ENCODE measurements at regions of chr3 and their contacts with region 1.

Region 1: GRCh38 chr3:45043728-45044299 is 17.7 kb downstream of the CLEC3B start:
- DNase-seq: no peak
- H3K4me3 ChIP-seq: no peak overlapping the region
- H3K27ac ChIP-seq: no peak overlapping the region
- H3K4me1 ChIP-seq: no peaks in the 10 kb centered on the region
- H3K27me3 ChIP-seq: peaks cover 7 to 13% of the 10 kb centered on the region in 2 experiments
- CTCF ChIP-seq: no peak
- POLR2A ChIP-seq: no peak

Region 2: DNA sequence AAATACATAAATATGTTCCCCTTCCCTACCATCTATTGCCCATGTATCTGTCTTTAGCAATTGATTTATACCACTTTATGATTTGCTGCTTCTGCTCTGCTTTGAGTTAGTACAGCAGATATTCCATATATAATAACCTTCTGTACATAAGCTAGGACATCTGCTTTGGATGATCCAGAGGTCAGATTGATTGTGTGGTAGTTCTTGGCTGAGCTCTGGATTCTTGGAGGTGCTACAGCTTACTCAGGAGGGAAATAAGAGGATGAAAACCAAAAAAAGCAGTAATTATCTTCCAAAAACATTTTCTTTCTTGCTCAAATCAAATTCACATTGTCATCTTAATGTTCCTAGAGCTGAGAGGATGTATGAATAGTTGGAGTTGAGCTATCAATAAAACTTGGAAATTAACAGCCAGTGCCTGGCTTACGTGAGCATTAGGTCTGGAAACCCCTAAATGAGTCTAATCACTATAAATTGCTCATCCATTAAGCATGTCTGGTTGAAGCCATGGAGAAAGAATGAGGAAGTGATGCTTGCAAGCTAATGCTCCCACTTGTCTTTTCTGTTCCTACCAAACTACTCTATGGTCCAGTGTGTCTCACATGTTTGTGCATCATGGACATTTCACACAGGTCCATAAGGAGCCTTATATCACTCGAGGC is 218.4 kb before region 1 on chr3:
- CTCF ChIA-PET with region 1: no interaction called
- POLR2A ChIA-PET with region 1: no interaction called
- dilution Hi-C with region 1: no loop called
- intact Hi-C with region 1: no loop called
- DNase-seq: no peak
- H3K4me3 ChIP-seq: no peak overlapping the region
- H3K27ac ChIP-seq: no peak overlapping the region
- H3K4me1 ChIP-seq: no peaks in the 10 kb centered on the region
- H3K27me3 ChIP-seq: no peaks in the 10 kb centered on the region
- CTCF ChIP-seq: no peak
- POLR2A ChIP-seq: no peak

Region 3: DNA sequence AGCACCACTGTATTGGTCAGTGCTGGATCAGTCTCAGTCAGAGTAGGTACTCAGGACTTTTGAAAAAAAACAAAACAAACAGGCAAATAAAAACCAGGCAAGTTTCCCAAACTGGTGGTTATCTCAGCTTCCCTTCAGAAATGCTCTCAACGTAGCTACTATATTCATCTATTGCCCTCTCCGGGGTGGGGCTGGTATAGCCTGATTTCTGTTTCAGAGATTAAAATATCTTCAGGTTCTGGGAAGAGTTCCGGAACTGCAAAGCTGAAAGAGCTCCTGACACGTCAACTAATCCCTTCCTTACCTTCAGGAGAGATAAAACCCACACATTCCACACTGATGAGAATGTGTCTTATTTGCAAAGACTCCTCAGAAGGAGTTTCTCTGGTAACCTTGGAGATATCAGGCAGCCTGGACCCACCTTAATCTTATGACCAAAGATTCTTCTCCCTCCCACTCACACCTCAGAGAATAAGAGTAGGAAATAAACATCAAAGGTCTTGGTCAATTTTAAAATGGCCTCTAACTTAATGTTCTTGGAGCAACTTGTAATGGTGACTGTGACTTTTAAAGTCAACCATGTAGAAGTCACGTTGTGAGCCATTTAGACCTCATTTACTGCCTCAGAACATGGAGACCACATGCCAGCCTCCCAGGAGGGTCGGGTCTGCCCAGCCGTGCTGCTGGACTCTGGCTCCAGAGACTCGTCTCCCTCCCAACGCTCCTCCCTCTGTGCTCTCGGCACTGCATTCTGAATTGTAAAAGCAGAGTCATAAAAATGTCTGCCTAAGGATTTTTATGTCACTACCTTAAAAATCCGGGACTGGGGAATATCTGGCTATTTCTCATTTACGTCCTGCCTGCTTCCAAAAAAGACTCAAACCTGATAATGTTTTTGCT is 48.6 kb after region 1 on chr3:
- CTCF ChIA-PET with region 1: interaction called, 15 read pairs
- POLR2A ChIA-PET with region 1: no interaction called
- dilution Hi-C with region 1: no loop called
- intact Hi-C with region 1: no loop called
- DNase-seq: no peak
- H3K4me3 ChIP-seq: no peak overlapping the region
- H3K27ac ChIP-seq: no peak overlapping the region
- H3K4me1 ChIP-seq: no peaks in the 10 kb centered on the region
- H3K27me3 ChIP-seq: peaks cover 2 to 5% of the 10 kb centered on the region in 2 experiments
- CTCF ChIP-seq: no peak
- POLR2A ChIP-seq: no peak

Region 4: DNA sequence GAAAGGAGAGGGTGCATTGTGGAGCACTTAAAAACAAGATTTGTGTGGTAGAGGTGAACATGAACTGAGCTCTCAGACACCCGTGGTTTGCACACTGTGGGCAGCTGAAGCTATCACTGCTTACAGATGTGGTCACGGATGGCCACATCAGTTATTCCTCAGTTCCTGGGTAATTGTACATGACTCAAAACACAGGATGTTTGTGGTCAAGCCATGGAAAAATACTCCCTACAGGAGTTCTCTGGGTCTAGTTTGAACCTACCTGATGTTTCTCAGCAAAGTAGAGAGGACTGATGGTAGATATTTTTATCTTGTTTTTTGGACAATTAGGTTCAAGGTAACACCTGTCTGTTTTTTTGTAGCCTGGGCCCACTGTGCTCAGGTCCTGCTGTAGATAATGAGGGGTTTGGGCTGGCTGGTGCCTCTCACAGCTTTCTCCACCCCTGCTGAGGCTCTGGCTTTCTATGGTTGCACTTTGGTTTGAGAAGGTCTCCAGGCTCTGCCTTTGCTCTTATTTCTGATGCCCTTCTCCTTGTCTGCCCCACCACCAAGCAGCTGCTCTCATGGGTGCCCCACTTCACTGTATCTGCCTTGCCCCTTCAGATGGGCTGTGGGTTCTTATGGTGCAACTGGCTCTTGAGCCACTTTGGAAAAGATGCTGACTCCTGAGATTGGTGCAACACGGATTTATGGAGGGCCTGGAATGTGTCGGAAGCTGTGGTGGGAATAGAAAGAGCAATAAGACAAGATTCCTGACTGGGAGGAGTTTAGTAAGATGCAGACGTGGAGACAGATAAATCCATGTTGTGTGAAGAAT is 62.2 kb after region 1 on chr3:
- CTCF ChIA-PET with region 1: no interaction called
- POLR2A ChIA-PET with region 1: no interaction called
- dilution Hi-C with region 1: no loop called
- intact Hi-C with region 1: no loop called
- DNase-seq: peak; percentile 13
- H3K4me3 ChIP-seq: no peak overlapping the region
- H3K27ac ChIP-seq: no peak overlapping the region
- H3K4me1 ChIP-seq: peaks cover 7% of the 10 kb centered on the region
- H3K27me3 ChIP-seq: peaks cover 0 to 2% of the 10 kb centered on the region in 2 experiments
- CTCF ChIP-seq: no peak
- POLR2A ChIP-seq: no peak

Region 5: DNA sequence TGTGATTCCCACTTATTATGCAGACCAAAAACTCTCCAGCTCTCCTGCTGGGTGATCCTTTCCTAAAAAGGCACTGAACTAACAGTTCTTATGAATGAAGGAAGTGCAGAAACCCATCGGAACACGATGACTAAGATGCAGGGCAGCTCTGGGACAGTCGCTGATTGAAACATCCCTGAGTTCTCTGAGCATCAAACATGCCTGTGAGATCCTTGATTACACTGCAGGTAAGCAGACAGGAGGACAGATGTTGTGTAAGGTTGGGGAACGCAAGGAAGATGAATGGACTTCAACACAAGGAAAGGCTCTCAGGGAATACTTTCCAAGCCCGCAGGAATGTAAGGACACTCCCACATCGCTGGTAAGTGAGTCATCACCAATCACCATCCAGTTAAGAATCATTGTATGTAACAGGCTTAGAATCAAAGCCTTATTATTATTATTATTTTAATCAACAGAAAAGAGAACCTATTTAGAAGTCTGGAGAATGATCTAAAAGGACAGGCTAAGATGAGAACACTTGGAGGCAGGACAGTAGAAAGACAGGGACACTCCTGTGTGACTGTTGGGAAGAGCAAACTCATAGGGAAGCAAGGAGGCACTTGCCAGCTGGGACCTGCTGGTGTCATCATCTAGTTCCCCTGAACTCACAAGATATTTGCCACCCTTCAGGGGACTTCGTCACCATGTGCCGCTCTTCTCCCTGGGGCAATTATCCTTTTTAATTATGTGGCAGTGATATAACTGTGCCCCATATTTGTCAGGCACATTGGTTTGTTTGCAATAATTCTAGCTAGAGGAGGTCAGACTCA is 156.2 kb after region 1 on chr3:
- CTCF ChIA-PET with region 1: interaction called, 21 read pairs
- POLR2A ChIA-PET with region 1: no interaction called
- dilution Hi-C with region 1: no loop called
- intact Hi-C with region 1: no loop called
- DNase-seq: peak; percentile 12
- H3K4me3 ChIP-seq: no peak overlapping the region
- H3K27ac ChIP-seq: no peak overlapping the region
- H3K4me1 ChIP-seq: peaks cover 4% of the 10 kb centered on the region
- H3K27me3 ChIP-seq: peaks cover 0 to 6% of the 10 kb centered on the region in 2 experiments
- CTCF ChIP-seq: no peak
- POLR2A ChIP-seq: no peak

Region 6: DNA sequence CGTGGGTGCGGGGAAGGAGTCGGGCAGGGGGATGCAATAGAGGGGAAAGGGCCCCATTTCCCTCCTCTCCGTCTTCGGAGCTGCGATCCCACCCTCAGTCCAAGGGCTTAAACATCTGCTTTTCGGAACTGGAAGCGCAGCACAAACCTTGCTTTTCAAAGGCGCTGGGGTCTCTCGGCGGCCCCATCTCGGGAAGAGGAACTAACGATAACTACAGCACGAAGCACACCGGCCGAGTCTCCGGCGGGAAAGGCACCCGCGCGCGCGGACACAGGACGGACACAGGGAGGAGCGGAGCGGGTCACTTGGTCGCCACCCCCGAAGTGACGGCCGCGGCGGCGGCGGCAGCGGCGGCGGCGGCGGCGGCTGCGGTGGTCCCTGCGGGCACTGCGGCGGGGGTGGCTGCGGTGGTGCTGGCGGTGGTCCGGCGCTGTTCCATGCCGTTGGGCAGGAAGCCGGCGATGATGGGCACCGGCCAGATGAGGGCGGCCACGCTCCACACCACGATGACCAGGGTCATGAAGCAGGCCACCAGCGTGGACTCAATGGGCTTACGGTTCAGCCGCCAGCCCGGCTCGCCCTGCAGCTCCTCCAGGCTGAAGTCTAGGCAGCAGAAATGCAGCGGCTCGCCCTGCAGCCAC is 181.1 kb after region 1 on chr3:
- CTCF ChIA-PET with region 1: interaction called, 61 read pairs
- POLR2A ChIA-PET with region 1: no interaction called
- dilution Hi-C with region 1: no loop called
- intact Hi-C with region 1: no loop called
- DNase-seq: peak; percentile 64
- H3K4me3 ChIP-seq: peak overlapping the region; percentile 12 to 76 (median 45)
- H3K27ac ChIP-seq: no peak overlapping the region
- H3K4me1 ChIP-seq: peaks cover 10% of the 10 kb centered on the region
- H3K27me3 ChIP-seq: peaks cover 20 to 42% of the 10 kb centered on the region in 2 experiments
- CTCF ChIP-seq: peak; percentile 52 to 72
- POLR2A ChIP-seq: no peak

Region 7: GRCh38 chr3:45499529-45499928 is 455.7 kb after region 1 on chr3:
- CTCF ChIA-PET with region 1: interaction called, 62 read pairs
- POLR2A ChIA-PET with region 1: no interaction called
- dilution Hi-C with region 1: loop called (anchors 25 kb)
- intact Hi-C with region 1: no loop called
- DNase-seq: peak; percentile 66
- H3K4me3 ChIP-seq: no peak overlapping the region
- H3K27ac ChIP-seq: no peak overlapping the region
- H3K4me1 ChIP-seq: peaks cover 5% of the 10 kb centered on the region
- H3K27me3 ChIP-seq: no peaks in the 10 kb centered on the region
- CTCF ChIP-seq: peak; percentile 10 to 22
- POLR2A ChIP-seq: no peak

Measured in endothelial cell of umbilical vein (primary cell).